ENCODE measurements at regions of chr5 and their contacts with region 1.

Region 1: GRCh38 chr5:57435701-57436134 is 46.9 kb downstream of the ACTBL2 start:
- DNase-seq: peak; percentile 99
- H3K4me3 ChIP-seq: no peak overlapping the region
- H3K27ac ChIP-seq: peak overlapping the region; percentile 98
- H3K4me1 ChIP-seq: peaks cover 71% of the 10 kb centered on the region
- H3K27me3 ChIP-seq: no peaks in the 10 kb centered on the region
- CTCF ChIP-seq: no peak
- POLR2A ChIP-seq: peak; percentile 37

Region 2: DNA sequence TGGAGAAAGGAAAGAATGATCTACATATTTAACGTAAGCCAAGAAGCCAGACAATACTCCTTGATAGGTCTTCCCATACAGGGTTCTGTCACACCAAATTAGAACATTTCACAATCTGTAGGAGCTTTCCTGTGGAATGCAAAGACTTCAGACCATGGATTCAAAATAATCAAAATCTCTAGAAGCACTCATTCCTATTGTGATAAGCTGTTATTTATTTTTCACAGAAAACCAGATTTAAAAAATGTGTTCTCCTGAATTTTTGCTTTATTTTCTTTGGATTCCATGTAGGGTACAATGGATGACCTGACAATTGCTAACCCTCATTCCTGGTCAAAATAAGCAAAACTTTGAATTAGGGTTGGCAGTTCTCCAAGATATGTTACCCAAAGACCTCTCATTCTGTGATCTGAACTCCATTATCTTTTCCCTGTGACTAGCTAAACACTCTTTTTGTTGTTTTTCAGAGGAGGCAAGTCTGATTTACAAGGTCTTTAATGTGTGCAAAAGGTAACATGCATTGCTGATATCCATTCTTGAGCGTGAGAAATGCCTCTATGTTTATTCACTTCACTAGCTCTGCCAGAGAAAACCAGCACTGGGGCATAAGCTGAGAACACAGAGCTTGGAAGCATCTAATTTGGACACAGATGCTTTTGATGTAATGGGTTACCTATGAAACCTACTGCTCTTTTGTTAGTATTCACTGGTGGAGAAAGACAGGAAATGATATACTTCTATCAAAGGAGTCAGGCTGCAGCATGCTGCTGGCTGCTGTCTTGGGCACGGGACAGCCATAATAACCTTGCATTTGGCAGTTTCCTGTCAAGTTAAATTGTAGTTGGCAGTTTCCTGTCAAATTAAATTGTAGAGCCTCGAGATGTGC is 15.5 kb after region 1 on chr5:
- CTCF ChIA-PET with region 1: no interaction called
- POLR2A ChIA-PET with region 1: no interaction called
- dilution Hi-C with region 1: no loop called
- intact Hi-C with region 1: loop called (anchors 1 kb)
- DNase-seq: peak; percentile 89
- H3K4me3 ChIP-seq: no peak overlapping the region
- H3K27ac ChIP-seq: peak overlapping the region; percentile 55
- H3K4me1 ChIP-seq: peaks cover 18% of the 10 kb centered on the region
- H3K27me3 ChIP-seq: no peaks in the 10 kb centered on the region
- CTCF ChIP-seq: no peak
- POLR2A ChIP-seq: peak; percentile 31

Region 3: DNA sequence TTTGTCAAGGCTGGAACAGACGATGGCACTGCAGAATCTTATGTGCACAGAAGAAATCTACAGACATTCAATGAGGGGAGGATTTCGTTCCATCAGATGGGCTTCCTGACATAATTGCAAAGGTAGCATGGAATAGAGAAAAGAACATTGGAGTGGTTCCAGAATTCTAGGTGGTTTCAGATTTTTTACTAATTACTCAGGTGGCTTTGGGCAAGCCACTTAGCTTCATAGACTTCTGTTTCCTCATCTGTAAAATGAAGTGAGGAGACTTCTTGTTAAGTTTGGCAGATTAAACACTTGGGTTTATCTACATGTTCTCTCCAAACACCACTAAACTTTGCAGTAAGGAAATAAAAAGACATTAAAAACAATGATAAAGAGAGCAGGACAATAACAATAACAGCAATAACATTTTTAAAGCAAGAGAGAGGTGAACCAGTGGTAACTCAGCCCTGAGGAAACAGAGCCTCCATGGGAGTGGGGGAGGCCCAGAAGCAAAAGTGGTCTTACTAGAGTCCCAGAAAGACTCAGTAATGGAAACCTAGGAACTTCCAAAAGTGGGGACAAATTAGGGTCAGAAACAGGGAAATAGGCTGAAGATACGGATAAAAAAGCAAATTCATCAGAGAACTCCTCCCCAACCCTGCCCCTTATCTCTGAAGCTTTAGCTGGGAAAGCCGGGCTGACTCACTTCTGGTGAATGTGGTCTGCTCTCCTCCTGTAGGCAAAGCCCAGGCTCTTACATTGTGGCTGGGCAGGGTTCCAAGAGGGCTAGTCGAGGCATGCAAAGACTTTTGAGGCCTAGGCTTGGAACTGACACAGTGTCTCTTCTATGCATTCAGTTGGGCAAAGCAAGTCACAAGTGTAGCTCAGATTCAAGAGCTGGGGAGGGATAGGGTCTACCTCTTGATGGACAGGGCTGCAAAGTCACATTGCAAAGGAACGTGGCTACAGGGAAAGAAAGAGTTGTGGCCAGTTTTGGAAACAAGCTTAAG is 58.7 kb after region 1 on chr5:
- CTCF ChIA-PET with region 1: interaction called, 13 read pairs
- POLR2A ChIA-PET with region 1: no interaction called
- dilution Hi-C with region 1: no loop called
- intact Hi-C with region 1: loop called (anchors 1 kb)
- DNase-seq: peak; percentile 93
- H3K4me3 ChIP-seq: no peak overlapping the region
- H3K27ac ChIP-seq: peak overlapping the region; percentile 92
- H3K4me1 ChIP-seq: peaks cover 48% of the 10 kb centered on the region
- H3K27me3 ChIP-seq: no peaks in the 10 kb centered on the region
- CTCF ChIP-seq: no peak
- POLR2A ChIP-seq: no peak

Region 4: GRCh38 chr5:57841676-57842363 is 406.1 kb after region 1 on chr5:
- CTCF ChIA-PET with region 1: no interaction called
- POLR2A ChIA-PET with region 1: no interaction called
- dilution Hi-C with region 1: no loop called
- intact Hi-C with region 1: loop called (anchors 1 kb)
- DNase-seq: peak; percentile 96
- H3K4me3 ChIP-seq: no peak overlapping the region
- H3K27ac ChIP-seq: peak overlapping the region; percentile 90
- H3K4me1 ChIP-seq: peaks cover 66% of the 10 kb centered on the region
- H3K27me3 ChIP-seq: no peaks in the 10 kb centered on the region
- CTCF ChIP-seq: no peak
- POLR2A ChIP-seq: no peak